HepG2 (cell line): ENCODE measurements at regions of chr4 and their contacts with region 1.

Region 1: GRCh38 chr4:74555231-74555630 is 110.3 kb downstream of the AREG start:
- DNase-seq: peak; percentile 15
- ATAC-seq: no peak
- H3K4me3 ChIP-seq: no peak overlapping the region
- H3K27ac ChIP-seq: no peak overlapping the region
- H3K4me1 ChIP-seq: no peaks in the 10 kb centered on the region
- H3K27me3 ChIP-seq: no peaks in the 10 kb centered on the region
- CTCF ChIP-seq: no peak
- EP300 ChIP-seq: no peak
- POLR2A ChIP-seq: no peak
- RAD21 ChIP-seq: no peak

Region 2: GRCh38 chr4:74206088-74206825 is 349.0 kb before region 1 on chr4:
- CTCF ChIA-PET with region 1: no interaction called
- POLR2A ChIA-PET with region 1: no interaction called
- in situ Hi-C with region 1: no loop called
- intact Hi-C with region 1: no loop called
- DNase-seq: no peak
- ATAC-seq: no peak
- H3K4me3 ChIP-seq: no peak overlapping the region
- H3K27ac ChIP-seq: no peak overlapping the region
- H3K4me1 ChIP-seq: peaks cover 17% of the 10 kb centered on the region
- H3K27me3 ChIP-seq: peaks cover 0 to 23% of the 10 kb centered on the region in 2 experiments; a peak in 3 of 5 replicates
- CTCF ChIP-seq: no peak
- EP300 ChIP-seq: no peak
- POLR2A ChIP-seq: no peak
- RAD21 ChIP-seq: no peak

Region 3: GRCh38 chr4:74659576-74660411 is 104.6 kb after region 1 on chr4:
- CTCF ChIA-PET with region 1: no interaction called
- POLR2A ChIA-PET with region 1: no interaction called
- in situ Hi-C with region 1: loop called (anchors 10 kb)
- intact Hi-C with region 1: no loop called
- DNase-seq: peak; percentile 92
- ATAC-seq: peak; percentile 71
- H3K4me3 ChIP-seq: no peak overlapping the region
- H3K27ac ChIP-seq: peak overlapping the region; percentile 69
- H3K4me1 ChIP-seq: peaks cover 77% of the 10 kb centered on the region
- H3K27me3 ChIP-seq: no peaks in the 10 kb centered on the region
- CTCF ChIP-seq: no peak
- EP300 ChIP-seq: peak in 1 of 2 experiments; percentile 97; a peak in 2 of 4 replicates
- POLR2A ChIP-seq: no peak
- RAD21 ChIP-seq: no peak